Activated CD4-positive, alpha-beta T cell treated with anti-CD3 and anti-CD28 coated beads for 36 hours (primary cell): ENCODE measurements at regions of chr1 and their contacts with region 1.

Region 1: GRCh38 chr1:41739061-41739955 is 179.4 kb downstream of the HIVEP3 start:
- DNase-seq: peak; percentile 95
- ATAC-seq: peak; percentile 50
- H3K4me3 Mint-ChIP-seq: peak overlapping the region; percentile 58
- H3K27ac Mint-ChIP-seq: peak overlapping the region; percentile 91
- H3K4me1 Mint-ChIP-seq: peaks cover 92% of the 10 kb centered on the region
- H3K27me3 Mint-ChIP-seq: no peaks in the 10 kb centered on the region

Region 2: DNA sequence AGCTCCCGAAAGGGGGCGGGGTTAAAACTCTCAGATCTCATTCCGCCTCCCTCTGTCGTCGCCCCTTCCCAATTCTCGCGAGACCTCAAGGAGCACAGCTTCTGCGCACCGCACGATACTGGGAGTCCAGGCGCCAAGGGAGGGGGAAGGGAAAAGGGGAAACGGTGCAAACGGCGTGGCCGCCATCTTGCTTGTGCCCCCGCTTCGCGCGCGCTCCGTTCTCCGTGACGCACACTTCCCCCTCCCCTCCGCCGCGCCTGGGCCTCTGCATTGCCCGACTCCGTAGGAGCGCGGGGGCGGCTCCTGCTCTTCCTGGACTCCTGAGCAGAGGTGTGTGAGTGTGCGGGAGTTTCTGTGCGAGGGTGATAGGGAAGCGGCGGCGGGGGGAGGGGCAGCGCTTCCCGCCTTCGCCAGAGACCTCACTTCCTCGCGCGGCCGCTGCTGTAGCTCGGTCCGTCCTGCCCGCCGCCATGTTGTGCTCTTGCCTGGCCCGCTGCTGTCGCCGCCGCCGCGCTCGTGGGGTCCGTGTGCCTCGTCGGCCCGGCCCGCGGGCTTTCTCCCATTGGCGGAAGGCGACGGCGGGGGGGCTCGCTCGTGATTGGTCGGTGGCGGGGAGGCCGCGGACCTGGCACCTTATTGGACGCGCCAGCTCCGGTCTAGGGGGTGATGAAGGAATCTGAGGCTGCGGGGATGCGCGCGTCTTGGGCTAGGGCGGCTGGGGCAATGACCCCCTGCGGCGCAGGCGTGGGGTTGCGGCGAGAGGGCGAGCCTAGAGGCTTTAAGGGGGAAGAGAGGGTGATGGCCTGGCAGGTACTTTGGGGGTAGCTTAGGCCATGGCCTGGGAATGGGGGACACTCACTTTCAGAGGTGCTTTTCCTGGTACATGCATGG is 1047.5 kb before region 1 on chr1 and contains the start of gene NFYC:
- CTCF ChIA-PET with region 1: no interaction called
- POLR2A ChIA-PET with region 1: no interaction called
- intact Hi-C with region 1: no loop called
- DNase-seq: peak; percentile 98
- ATAC-seq: peak; percentile 87
- H3K4me3 Mint-ChIP-seq: peak within 1 kb of the TSS; percentile 100
- H3K27ac Mint-ChIP-seq: peak within 1 kb of the TSS; percentile 97
- H3K4me1 Mint-ChIP-seq: peaks cover 56% of the 10 kb centered on the region
- H3K27me3 Mint-ChIP-seq: no peaks in the 10 kb centered on the region
- total RNA-seq, gene NFYC: 53.6 to 85.4 TPM

Region 3: DNA sequence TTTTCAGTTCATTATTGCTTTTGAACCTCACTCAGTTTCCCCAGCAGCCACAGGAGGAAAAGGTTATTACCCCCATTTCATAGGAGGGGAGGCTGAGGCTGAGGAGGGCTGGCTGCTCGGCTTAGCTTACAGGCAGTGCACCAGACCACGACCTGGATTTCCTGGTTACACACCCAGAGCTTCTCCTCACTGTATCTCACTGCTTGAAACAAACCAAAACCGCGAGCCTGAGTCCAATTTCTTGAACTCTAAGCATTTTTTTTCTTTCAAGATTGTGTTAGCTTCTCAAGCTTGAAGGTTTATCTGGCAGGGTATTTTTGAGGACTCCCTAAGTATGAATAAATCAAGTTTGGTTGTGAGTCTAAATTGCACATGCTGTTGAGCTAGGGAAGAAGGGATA is 65.9 kb before region 1 on chr1:
- CTCF ChIA-PET with region 1: interaction called, 3 read pairs
- POLR2A ChIA-PET with region 1: no interaction called
- intact Hi-C with region 1: loop called in 1 of 2 experiments (anchors 2 kb)
- DNase-seq: peak; percentile 68
- ATAC-seq: peak; percentile 71
- H3K4me3 Mint-ChIP-seq: peak overlapping the region; percentile 50
- H3K27ac Mint-ChIP-seq: peak overlapping the region; percentile 80
- H3K4me1 Mint-ChIP-seq: peaks cover 91% of the 10 kb centered on the region
- H3K27me3 Mint-ChIP-seq: no peaks in the 10 kb centered on the region

Region 4: DNA sequence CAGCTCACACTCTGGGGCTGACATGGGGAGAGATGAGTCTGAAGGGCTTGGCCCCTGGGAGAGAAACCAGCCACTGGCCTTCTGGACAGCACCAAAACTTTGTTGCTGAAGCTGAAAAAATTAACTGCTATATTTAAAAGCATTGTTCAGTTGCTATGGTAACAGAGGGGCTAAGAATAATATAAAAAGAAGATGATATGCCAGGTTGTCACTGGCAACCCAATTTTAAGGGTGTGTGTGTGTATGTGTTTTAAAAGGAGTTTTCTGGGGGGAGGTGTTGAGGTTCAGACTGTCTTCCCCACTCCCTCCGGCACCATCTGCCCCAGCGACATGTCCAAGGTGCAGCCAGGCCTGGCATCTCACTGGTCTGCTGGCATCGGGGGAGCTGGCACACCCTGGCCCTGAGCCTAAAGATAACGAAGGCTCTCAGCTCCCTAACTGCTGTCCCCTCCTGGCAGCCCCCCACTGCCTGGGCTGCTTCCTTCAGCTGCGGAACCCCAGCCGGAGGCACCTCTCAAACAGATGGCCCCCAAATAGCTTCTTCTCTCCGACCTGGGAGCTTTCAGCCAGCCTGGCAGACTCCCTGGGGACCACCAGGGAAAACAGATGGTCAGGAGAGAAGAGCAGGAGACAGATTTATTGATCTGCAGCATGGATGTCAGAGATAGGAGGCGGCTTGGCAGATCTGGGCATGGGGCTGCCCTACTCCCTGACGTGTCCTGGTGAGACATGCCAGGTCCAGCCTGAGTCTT is 24.5 kb before region 1 on chr1:
- CTCF ChIA-PET with region 1: no interaction called
- POLR2A ChIA-PET with region 1: no interaction called
- intact Hi-C with region 1: no loop called
- DNase-seq: no peak
- ATAC-seq: no peak
- H3K4me3 Mint-ChIP-seq: no peak overlapping the region
- H3K27ac Mint-ChIP-seq: peak overlapping the region; percentile 39
- H3K4me1 Mint-ChIP-seq: peaks cover 15% of the 10 kb centered on the region
- H3K27me3 Mint-ChIP-seq: no peaks in the 10 kb centered on the region

Region 5: DNA sequence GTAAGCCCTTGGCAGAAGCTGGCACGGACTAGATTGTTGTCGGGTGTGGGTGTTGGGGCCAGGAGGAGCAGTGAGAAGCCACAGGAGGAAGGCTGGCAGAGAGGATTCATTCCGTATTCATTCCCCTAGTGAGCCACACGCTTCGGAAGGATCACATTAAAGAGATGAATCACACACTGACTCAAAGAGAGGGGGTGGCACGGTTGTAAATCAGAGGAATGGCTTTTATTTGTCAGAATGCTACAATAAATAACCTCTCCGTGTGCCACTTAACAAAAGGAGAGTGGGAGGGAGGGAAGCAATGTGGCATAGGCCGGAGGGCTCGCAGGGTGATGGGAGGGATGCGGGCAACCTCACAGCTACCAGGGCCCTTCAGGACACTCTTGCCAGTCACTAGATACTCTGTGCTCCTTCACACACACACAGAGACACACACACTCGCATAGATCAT is 43.9 kb after region 1 on chr1:
- CTCF ChIA-PET with region 1: interaction called, 3 read pairs
- POLR2A ChIA-PET with region 1: no interaction called
- intact Hi-C with region 1: loop called (anchors 1 kb)
- DNase-seq: peak; percentile 78
- ATAC-seq: peak; percentile 98
- H3K4me3 Mint-ChIP-seq: peak overlapping the region; percentile 64
- H3K27ac Mint-ChIP-seq: peak overlapping the region; percentile 86
- H3K4me1 Mint-ChIP-seq: peaks cover 35% of the 10 kb centered on the region
- H3K27me3 Mint-ChIP-seq: no peaks in the 10 kb centered on the region

Region 6: GRCh38 chr1:41802532-41803501 is 63.5 kb after region 1 on chr1:
- CTCF ChIA-PET with region 1: no interaction called
- POLR2A ChIA-PET with region 1: no interaction called
- intact Hi-C with region 1: loop called in 1 of 2 experiments (anchors 1 kb)
- DNase-seq: no peak
- ATAC-seq: no peak
- H3K4me3 Mint-ChIP-seq: no peak overlapping the region
- H3K27ac Mint-ChIP-seq: peak overlapping the region; percentile 47
- H3K4me1 Mint-ChIP-seq: peaks cover 81% of the 10 kb centered on the region
- H3K27me3 Mint-ChIP-seq: no peaks in the 10 kb centered on the region